ENCODE measurements at regions of chr19 and their contacts with region 1.

Region 1: GRCh38 chr19:34041925-34042521 is 130.3 kb upstream of the LSM14A start:
- DNase-seq: peak; percentile 59
- H3K4me3 ChIP-seq: no peak overlapping the region
- H3K27ac ChIP-seq: no peak overlapping the region
- H3K4me1 ChIP-seq: no peaks in the 10 kb centered on the region
- H3K27me3 ChIP-seq: peaks cover 26% of the 10 kb centered on the region
- CTCF ChIP-seq: peak; percentile 84

Region 2: DNA sequence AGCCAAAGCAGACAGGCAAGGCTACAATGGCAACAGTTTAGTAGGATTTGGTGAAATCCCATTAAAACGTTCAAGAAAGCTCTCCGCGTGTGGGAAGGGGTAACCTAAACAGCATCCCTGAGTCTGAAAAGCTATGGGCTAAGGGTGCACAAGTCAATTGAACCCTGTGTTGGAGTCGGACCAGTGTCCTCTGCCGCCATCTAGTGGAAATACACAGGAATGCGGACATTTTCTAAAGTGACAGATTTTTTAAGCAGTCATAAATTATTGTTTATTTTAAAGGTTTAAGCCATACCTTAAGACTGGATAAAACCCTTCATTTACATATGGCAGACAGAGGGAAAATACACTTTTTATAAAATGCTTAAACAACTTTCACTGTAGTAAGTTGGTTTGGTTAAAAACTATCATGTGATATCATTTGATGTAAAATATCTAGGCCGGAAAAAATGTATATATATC is 103.7 kb after region 1 on chr19:
- intact Hi-C with region 1: loop called (anchors 10 kb)
- DNase-seq: no peak
- H3K4me3 ChIP-seq: no peak overlapping the region
- H3K27ac ChIP-seq: no peak overlapping the region
- H3K4me1 ChIP-seq: no peaks in the 10 kb centered on the region
- H3K27me3 ChIP-seq: peaks cover 4% of the 10 kb centered on the region
- CTCF ChIP-seq: peak; percentile 80

Measured in left ventricle myocardium inferior (tissue), 1 donor.